Activated CD8-positive, alpha-beta T cell treated with anti-CD3 and anti-CD28 coated beads for 36 hours (primary cell): ENCODE measurements at regions of chr12 and their contacts with region 1.

Region 1: GRCh38 chr12:24838531-24838950 is 110.4 kb downstream of the BCAT1 start:
- DNase-seq: peak; percentile 64
- ATAC-seq: no peak
- H3K4me3 Mint-ChIP-seq: no peak overlapping the region
- H3K27ac Mint-ChIP-seq: peak overlapping the region; percentile 80
- H3K4me1 Mint-ChIP-seq: peaks cover 35% of the 10 kb centered on the region
- H3K27me3 Mint-ChIP-seq: peaks cover 6% of the 10 kb centered on the region
- CTCF ChIP-seq: no peak

Region 2: DNA sequence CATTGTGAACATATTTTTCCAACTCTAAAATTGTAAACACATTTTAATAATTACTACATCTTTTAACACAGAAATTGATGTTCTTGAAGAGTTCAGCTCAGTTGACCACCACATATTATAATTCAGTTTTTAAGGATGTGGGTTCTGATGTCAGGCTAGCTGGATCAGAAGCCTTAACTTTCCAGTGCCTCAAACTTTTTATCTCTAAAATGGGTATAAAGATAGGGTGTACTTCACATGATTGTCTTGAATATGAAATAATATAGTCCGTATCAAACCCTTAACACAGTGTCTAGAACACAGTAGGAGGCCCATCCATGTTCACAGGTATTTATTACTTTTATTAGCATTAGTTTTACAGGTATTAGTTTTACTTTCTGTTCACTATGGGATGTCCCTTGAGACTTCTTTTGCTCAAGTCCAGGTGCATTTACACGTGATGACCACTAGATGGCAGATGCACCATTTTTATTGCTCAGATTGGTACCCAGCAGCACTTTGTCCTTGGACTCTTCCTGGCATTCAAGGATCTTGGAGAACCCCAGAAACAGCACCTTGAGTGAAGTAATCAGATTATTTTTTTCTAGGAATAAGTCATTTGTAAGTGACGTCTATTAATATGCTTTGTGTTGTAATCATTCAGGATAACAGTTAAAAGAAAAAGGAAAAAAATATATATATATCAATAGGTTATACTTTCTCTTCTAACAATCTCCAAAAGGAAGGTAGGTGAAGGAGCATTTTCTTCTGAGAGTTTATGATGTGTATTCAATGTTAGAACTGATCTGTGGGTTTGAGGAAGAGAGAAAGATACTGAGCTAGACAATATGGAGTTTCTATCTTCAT is 1633.4 kb before region 1 on chr12:
- CTCF ChIA-PET with region 1: no interaction called
- POLR2A ChIA-PET with region 1: no interaction called
- intact Hi-C with region 1: loop called (anchors 5 kb)
- DNase-seq: peak; percentile 3
- ATAC-seq: peak; percentile 64
- H3K4me3 Mint-ChIP-seq: no peak overlapping the region
- H3K27ac Mint-ChIP-seq: no peak overlapping the region
- H3K4me1 Mint-ChIP-seq: no peaks in the 10 kb centered on the region
- H3K27me3 Mint-ChIP-seq: peaks cover 3% of the 10 kb centered on the region
- CTCF ChIP-seq: peak; percentile 94

Region 3: DNA sequence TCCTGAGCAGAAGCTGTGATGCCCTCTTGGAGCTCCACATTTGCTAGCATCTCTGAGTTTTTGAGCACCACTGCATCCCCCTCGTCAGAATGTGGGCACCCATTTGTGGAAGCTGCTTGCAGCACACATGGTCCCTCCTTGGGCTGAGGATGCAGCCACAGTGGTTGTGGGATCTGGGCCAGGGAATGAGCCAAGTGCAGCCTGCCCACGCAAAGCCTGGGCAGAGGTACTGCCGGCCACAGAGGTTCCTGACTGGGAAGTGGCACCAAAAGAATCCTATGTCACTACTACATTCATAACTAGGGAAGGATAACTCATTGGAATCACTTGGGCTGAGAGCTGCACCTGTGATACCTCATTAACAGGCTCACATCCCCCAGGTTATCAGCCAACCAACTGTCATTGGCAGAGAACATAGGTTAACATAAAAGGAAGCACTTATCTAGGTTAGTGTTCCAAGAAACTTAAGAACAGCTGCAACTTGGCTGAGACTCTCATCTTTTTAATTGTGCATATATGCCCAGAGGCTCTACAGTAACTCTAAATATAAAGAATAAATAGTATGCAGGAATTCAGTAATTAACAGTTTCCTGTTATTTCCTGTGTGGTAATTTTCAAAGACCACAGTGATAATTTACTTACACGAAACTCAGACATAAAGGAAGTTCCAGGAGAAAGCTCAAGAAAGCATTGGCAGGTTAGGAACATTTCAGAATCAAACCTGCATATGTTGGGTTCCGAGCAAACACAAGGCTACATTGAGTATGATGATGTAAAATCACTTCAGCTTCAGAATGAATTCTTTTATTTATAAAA is 34.9 kb before region 1 on chr12:
- CTCF ChIA-PET with region 1: interaction called, 3 read pairs
- POLR2A ChIA-PET with region 1: interaction called, 4 read pairs
- intact Hi-C with region 1: loop called (anchors 5 kb)
- DNase-seq: no peak
- ATAC-seq: no peak
- H3K4me3 Mint-ChIP-seq: no peak overlapping the region
- H3K27ac Mint-ChIP-seq: peak overlapping the region; percentile 32
- H3K4me1 Mint-ChIP-seq: peaks cover 7% of the 10 kb centered on the region
- H3K27me3 Mint-ChIP-seq: no peaks in the 10 kb centered on the region
- CTCF ChIP-seq: no peak

Region 4: DNA sequence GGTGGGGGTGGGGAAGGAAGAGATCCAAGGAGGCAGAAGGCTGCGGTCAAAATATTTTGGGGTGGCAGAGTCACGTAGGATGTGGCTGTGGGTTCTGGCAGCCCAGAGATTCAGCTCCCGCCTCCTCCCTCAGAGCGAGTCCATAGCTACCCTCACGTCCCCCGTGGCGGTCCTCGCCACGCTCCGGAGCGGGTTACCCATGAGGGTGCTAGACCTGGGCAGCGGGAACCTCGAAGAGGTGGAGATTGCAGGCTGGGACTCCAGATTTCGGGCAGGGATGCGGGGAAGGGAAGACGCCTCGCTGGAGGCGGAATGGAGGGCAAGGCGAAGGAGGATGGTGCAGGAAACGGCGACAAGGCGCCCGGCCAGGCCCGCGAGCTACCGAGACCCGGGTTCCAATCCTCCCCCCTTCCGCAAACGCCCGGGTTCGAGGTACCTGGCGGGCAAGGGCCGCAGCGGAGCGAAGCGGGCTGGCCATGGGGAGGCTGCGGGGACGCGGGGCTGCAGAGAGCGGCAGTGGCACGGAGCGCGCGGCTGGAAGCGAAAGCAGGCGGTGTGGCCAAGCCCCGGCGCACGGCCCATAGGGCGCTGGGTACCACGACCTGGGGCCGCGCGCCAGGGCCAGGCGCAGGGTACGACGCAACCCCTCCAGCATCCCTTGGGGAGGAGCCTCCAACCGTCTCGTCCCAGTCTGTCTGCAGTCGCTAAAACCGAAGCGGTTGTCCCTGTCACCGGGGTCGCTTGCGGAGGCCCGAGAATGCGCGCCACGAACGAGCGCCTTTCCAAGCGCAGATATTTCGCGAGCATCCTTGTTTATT is 64.2 kb after region 1 on chr12:
- CTCF ChIA-PET with region 1: interaction called, 4 read pairs
- POLR2A ChIA-PET with region 1: interaction called, 5 read pairs
- intact Hi-C with region 1: loop called (anchors 1 kb)
- DNase-seq: peak; percentile 64
- ATAC-seq: peak; percentile 45
- H3K4me3 Mint-ChIP-seq: peak overlapping the region; percentile 87
- H3K27ac Mint-ChIP-seq: peak overlapping the region; percentile 88
- H3K4me1 Mint-ChIP-seq: peaks cover 35% of the 10 kb centered on the region
- H3K27me3 Mint-ChIP-seq: peaks cover 17% of the 10 kb centered on the region
- CTCF ChIP-seq: no peak

Region 5: GRCh38 chr12:24948757-24949722 is 110.5 kb after region 1 on chr12 and contains the start of gene BCAT1:
- CTCF ChIA-PET with region 1: interaction called, 3 read pairs
- POLR2A ChIA-PET with region 1: interaction called, 12 read pairs
- intact Hi-C with region 1: loop called (anchors 5 kb)
- DNase-seq: peak; percentile 70
- ATAC-seq: peak; percentile 66
- H3K4me3 Mint-ChIP-seq: peak within 1 kb of the TSS; percentile 75
- H3K27ac Mint-ChIP-seq: peak within 1 kb of the TSS; percentile 84
- H3K4me1 Mint-ChIP-seq: peaks cover 46% of the 10 kb centered on the region
- H3K27me3 Mint-ChIP-seq: peaks cover 32% of the 10 kb centered on the region
- CTCF ChIP-seq: no peak
- total RNA-seq, gene BCAT1: 53.3 to 55.6 TPM